ENCODE measurements at regions of chr18 and their contacts with region 1.

Region 1: DNA sequence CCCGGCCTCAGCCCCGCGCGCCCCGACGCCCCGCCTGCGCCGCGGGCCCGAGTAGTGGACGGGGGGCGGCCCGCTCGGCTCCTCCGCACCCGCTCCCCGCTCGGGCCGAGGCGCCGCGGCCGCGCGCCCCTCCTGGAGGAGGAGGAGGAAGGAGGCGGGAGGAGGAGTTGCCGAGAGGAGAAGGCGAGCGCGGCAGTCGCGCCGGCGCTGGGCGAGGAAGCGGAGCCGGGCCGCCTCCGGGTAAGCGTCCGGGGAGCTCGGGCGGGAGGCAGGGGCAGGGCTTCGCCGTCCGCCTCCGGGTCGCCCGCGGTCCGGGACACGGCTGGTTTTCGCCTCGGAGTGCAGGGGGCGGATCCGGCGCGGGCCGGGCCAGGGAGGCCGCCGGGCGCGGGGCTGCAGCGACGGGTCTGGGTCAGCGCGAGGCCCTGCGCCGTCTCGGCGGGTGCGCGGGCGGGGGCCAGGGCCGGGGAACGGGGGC is at the start of gene SOCS6:
- DNase-seq: peak; percentile 68
- H3K4me3 Mint-ChIP-seq: peak within 1 kb of the TSS; percentile 81
- H3K27ac Mint-ChIP-seq: peak within 1 kb of the TSS; percentile 83
- H3K4me1 Mint-ChIP-seq: peaks cover 24% of the 10 kb centered on the region
- H3K27me3 Mint-ChIP-seq: no peaks in the 10 kb centered on the region
- CTCF ChIP-seq: no peak
- total RNA-seq, gene SOCS6: 16.9 and 20.4 TPM in 2 replicates

Region 2: GRCh38 chr18:70205421-70206397 is 83.2 kb before region 1 on chr18 and contains the start of gene RTTN:
- CTCF ChIA-PET with region 1: interaction called, 3 read pairs
- POLR2A ChIA-PET with region 1: interaction called, 6 read pairs
- intact Hi-C with region 1: loop called (anchors 2 kb)
- DNase-seq: peak; percentile 92
- H3K4me3 Mint-ChIP-seq: peak within 1 kb of the TSS; percentile 90
- H3K27ac Mint-ChIP-seq: peak within 1 kb of the TSS; percentile 93
- H3K4me1 Mint-ChIP-seq: peaks cover 16% of the 10 kb centered on the region
- H3K27me3 Mint-ChIP-seq: no peaks in the 10 kb centered on the region
- CTCF ChIP-seq: no peak
- total RNA-seq, gene RTTN: 55.8 and 64.7 TPM in 2 replicates

Region 3: GRCh38 chr18:70271742-70272141 is 17.1 kb before region 1 on chr18:
- CTCF ChIA-PET with region 1: no interaction called
- POLR2A ChIA-PET with region 1: no interaction called
- intact Hi-C with region 1: no loop called
- DNase-seq: no peak
- H3K4me3 Mint-ChIP-seq: no peak overlapping the region
- H3K27ac Mint-ChIP-seq: no peak overlapping the region
- H3K4me1 Mint-ChIP-seq: no peaks in the 10 kb centered on the region
- H3K27me3 Mint-ChIP-seq: no peaks in the 10 kb centered on the region
- CTCF ChIP-seq: no peak

Region 4: DNA sequence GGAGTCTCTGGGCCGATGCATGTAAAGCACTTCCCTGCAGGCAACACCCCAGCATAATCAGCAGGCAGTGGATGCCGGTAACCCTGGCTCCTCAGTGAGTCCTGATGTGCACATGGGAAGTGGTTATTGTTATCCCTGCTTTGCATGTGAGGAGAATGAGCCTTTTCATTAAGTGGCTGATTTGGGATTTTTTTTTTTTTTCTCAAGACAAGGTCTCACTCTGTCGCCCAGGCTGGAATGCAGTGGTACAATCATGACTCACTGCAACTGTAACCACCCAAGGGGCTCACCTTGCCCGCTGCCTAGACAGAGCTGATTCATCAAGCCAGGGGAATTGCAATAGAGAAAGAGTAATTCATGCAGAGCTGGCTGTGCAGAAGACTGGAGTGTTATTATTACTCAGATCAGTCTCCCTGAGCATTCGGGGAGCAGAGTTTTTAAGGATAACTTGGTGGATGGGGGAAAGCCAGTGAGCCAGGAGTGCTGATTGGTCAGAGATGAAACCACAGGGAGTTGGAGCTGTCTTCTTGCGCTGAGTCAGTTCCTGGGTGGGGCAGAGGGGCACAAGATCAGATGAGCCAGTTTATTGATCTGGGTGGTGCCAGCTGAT is 95.4 kb after region 1 on chr18:
- CTCF ChIA-PET with region 1: no interaction called
- POLR2A ChIA-PET with region 1: no interaction called
- intact Hi-C with region 1: loop called (anchors 10 kb)
- DNase-seq: peak; percentile 90
- H3K4me3 Mint-ChIP-seq: peak overlapping the region; percentile 64
- H3K27ac Mint-ChIP-seq: peak overlapping the region; percentile 89
- H3K4me1 Mint-ChIP-seq: peaks cover 29% of the 10 kb centered on the region
- H3K27me3 Mint-ChIP-seq: no peaks in the 10 kb centered on the region
- CTCF ChIP-seq: no peak

Measured in MCF 10A (cell line).